ENCODE measurements at regions of chr2 and their contacts with region 1.

Region 1: GRCh38 chr2:159557451-159558034 is 58.8 kb downstream of the BAZ2B start:
- DNase-seq: no peak
- H3K4me3 ChIP-seq: no peak overlapping the region
- H3K27ac ChIP-seq: no peak overlapping the region
- H3K4me1 ChIP-seq: no peaks in the 10 kb centered on the region
- H3K27me3 ChIP-seq: no peaks in the 10 kb centered on the region
- CTCF ChIP-seq: peak; percentile 25

Region 2: GRCh38 chr2:159362816-159363251 is 194.7 kb before region 1 on chr2:
- intact Hi-C with region 1: no loop called
- DNase-seq: no peak
- H3K4me3 ChIP-seq: no peak overlapping the region
- H3K27ac ChIP-seq: no peak overlapping the region
- H3K4me1 ChIP-seq: no peaks in the 10 kb centered on the region
- H3K27me3 ChIP-seq: no peaks in the 10 kb centered on the region
- CTCF ChIP-seq: no peak

Region 3: GRCh38 chr2:159419403-159419802 is 138.1 kb before region 1 on chr2:
- intact Hi-C with region 1: no loop called
- DNase-seq: no peak
- H3K4me3 ChIP-seq: no peak overlapping the region
- H3K27ac ChIP-seq: no peak overlapping the region
- H3K4me1 ChIP-seq: no peaks in the 10 kb centered on the region
- H3K27me3 ChIP-seq: no peaks in the 10 kb centered on the region
- CTCF ChIP-seq: no peak

Region 4: GRCh38 chr2:159712143-159712928 is 154.8 kb after region 1 on chr2 and contains the start of gene MARCHF7:
- intact Hi-C with region 1: loop called (anchors 10 kb)
- DNase-seq: peak; percentile 98
- H3K4me3 ChIP-seq: peak within 1 kb of the TSS; percentile 91
- H3K27ac ChIP-seq: peak within 1 kb of the TSS; percentile 97
- H3K4me1 ChIP-seq: peaks cover 8% of the 10 kb centered on the region
- H3K27me3 ChIP-seq: no peaks in the 10 kb centered on the region
- CTCF ChIP-seq: peak; percentile 18
- total RNA-seq, gene MARCHF7: 39.8 to 75.1 TPM

Region 5: DNA sequence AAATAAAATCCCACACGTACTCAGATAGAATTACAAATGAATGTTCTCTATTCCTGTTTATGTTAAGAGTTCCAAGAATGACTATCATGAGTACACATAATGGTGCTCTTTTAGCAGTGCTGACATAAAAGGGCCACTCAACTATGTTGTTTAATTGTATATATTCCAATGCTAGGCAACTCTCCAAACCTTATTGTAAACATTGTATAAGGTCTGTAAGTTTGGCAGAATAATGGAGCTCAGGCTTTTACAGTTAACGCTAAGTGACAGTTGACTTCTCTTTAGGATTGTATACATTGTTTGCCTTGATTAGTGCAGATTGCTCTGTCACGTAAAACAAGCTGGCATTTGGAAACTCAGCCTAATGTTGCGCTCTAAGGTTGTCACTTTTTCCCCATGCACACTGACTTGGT is 915.3 kb after region 1 on chr2:
- intact Hi-C with region 1: no loop called
- DNase-seq: no peak
- H3K4me3 ChIP-seq: no peak overlapping the region
- H3K27ac ChIP-seq: peak overlapping the region; percentile 41
- H3K4me1 ChIP-seq: no peaks in the 10 kb centered on the region
- H3K27me3 ChIP-seq: no peaks in the 10 kb centered on the region
- CTCF ChIP-seq: no peak